IMR-90 (cell line): ENCODE measurements at regions of chr4 and their contacts with region 1.

Region 1: DNA sequence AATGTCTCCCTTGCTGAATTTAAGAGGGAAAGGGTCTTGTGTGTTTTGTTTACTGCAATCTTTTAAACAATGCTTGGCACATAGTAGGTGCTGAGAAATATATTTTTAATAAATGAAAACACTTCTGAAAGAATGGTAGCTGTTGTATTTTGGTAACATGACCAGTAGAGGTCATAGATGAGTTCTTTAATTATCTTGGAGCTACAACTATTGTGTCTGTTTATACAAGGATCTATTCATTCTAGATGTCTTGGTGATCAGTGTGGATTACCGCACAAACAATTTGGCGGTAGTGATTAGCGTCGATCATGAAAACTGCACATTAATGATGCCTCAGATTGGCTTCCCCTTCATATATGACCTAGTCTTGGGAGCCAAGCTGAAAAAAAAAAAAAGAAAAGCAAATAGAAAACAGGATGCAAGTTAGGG is 21.4 kb upstream of the SCRG1 start:
- DNase-seq: peak; percentile 28
- ATAC-seq: peak; percentile 55
- H3K4me3 ChIP-seq: no peak overlapping the region
- H3K27ac ChIP-seq: no peak overlapping the region
- H3K4me1 ChIP-seq: peaks cover 3% of the 10 kb centered on the region
- H3K27me3 ChIP-seq: no peaks in the 10 kb centered on the region
- CTCF ChIP-seq: peak; percentile 63
- POLR2A ChIP-seq: no peak
- RAD21 ChIP-seq: peak; percentile 55

Region 2: DNA sequence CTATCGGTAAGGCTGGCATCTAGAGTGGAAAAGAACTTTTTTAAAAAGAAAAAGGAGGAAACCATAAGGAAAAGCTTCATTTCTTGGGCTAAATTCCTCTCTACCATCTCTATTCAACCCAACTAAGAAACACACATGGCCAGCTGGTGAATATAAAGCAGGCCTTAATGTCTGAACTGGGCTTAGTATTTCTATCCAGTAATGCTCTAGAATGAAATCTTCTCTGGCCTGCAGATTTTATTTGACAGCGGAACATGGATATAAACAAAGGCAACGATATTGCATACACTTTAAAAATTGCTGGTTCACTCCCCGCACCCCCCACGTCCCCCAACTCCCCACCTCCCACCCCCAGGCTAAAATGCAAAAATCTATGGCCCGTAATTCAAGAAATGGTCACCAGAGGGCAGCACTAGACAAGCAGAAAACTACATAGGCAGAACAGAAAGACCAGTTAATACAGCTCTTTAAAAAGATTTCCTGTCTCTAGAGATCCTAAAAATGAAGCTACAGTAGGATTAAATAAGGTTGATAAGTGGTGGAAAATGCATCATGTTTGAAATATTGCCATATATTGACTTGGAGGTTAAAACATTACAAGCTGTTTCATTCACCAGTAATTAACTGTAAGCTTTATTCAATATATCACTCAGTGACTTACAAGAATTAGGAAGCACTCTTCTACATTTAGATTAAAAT is 407.0 kb before region 1 on chr4:
- CTCF ChIA-PET with region 1: interaction called, 3 read pairs
- POLR2A ChIA-PET with region 1: no interaction called
- dilution Hi-C with region 1: no loop called
- in situ Hi-C with region 1: loop called (anchors 5 kb)
- intact Hi-C with region 1: loop called (anchors 1 kb)
- DNase-seq: peak; percentile 48
- ATAC-seq: peak; percentile 63
- H3K4me3 ChIP-seq: no peak overlapping the region
- H3K27ac ChIP-seq: no peak overlapping the region
- H3K4me1 ChIP-seq: peaks cover 1% of the 10 kb centered on the region; the same call in 1 of the 2 replicates
- H3K27me3 ChIP-seq: peaks cover 7% of the 10 kb centered on the region
- CTCF ChIP-seq: peak; percentile 63
- POLR2A ChIP-seq: no peak
- RAD21 ChIP-seq: peak; percentile 74

Region 3: DNA sequence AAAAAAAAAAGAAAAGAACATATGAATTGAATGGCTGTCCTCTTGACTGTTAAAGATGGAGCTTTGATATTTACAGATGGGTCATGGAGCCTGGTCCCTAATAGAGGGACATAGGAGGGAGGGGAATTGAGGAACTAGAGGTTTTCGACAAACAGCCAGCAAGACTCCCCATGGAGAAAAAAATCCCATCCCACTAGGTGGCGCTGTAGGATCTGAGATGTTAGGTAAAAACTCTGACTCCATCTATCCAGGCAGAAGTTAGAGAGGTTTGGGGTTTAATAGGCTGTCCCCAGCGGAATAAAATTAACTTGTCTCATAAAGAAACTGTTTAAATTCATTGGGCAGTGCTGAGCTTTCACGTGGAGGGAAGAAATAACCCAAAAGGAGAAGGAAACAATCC is 132.0 kb before region 1 on chr4:
- CTCF ChIA-PET with region 1: no interaction called
- POLR2A ChIA-PET with region 1: no interaction called
- dilution Hi-C with region 1: no loop called
- in situ Hi-C with region 1: no loop called
- intact Hi-C with region 1: loop called (anchors 1 kb)
- DNase-seq: peak; percentile 57
- ATAC-seq: peak; percentile 42; the same call in 1 of the 2 replicates
- H3K4me3 ChIP-seq: no peak overlapping the region
- H3K27ac ChIP-seq: no peak overlapping the region
- H3K4me1 ChIP-seq: no peaks in the 10 kb centered on the region
- H3K27me3 ChIP-seq: no peaks in the 10 kb centered on the region
- CTCF ChIP-seq: peak; percentile 53
- POLR2A ChIP-seq: no peak
- RAD21 ChIP-seq: peak; percentile 50

Region 4: DNA sequence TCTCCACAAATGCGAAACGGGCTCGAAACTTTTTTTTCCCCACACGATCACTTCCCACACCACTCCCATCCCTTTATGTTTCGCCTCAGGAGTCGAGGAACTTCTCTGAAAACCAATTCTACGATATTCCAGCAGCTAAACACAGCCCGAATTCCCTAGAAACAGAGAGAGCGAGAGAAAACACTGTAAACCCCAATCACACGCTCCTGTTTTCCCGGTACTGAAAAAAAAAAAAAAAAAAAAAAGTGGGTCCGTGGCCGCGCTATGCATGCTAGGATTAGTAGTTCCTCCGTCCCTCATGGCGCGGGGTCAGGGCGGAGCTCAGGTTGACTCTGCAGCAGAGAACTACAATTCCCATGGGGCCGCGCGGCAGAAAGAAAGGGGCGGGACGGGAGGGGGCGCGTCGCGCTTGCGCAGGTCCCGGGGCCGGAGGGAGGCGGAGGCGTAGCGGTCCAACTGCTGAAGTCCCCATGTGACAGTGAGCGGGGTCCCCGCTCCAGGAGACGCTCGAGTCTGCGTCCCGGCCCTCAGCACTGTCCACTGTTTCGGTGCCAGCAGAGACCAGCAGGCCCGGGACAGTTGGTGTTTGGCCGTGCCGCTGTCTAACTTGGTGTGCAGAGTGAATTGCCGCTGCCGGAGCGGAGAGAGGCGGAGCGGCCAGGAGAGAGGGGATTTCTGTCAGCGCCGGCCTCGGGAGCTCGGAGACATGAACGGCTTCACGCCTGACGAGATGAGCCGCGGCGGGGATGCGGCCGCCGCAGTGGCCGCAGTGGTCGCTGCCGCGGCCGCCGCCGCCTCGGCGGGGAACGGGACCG is 49.7 kb before region 1 on chr4 and contains the start of gene SAP30:
- CTCF ChIA-PET with region 1: no interaction called
- POLR2A ChIA-PET with region 1: interaction called, 3 read pairs
- dilution Hi-C with region 1: no loop called
- in situ Hi-C with region 1: no loop called
- intact Hi-C with region 1: loop called (anchors 2 kb)
- DNase-seq: peak; percentile 98
- ATAC-seq: peak; percentile 91
- H3K4me3 ChIP-seq: peak within 1 kb of the TSS; percentile 96
- H3K27ac ChIP-seq: peak within 1 kb of the TSS; percentile 78
- H3K4me1 ChIP-seq: no peaks in the 10 kb centered on the region; the same call in 1 of the 2 replicates
- H3K27me3 ChIP-seq: no peaks in the 10 kb centered on the region
- CTCF ChIP-seq: no peak
- POLR2A ChIP-seq: peak; percentile 81
- RAD21 ChIP-seq: no peak
- total RNA-seq, gene SAP30: 3.8 and 13.9 TPM in 2 replicates

Region 5: GRCh38 chr4:173752610-173753230 is 332.4 kb after region 1 on chr4:
- CTCF ChIA-PET with region 1: interaction called, 3 read pairs
- POLR2A ChIA-PET with region 1: no interaction called
- dilution Hi-C with region 1: no loop called
- in situ Hi-C with region 1: no loop called
- intact Hi-C with region 1: loop called (anchors 5 kb)
- DNase-seq: peak; percentile 4
- ATAC-seq: no peak
- H3K4me3 ChIP-seq: no peak overlapping the region
- H3K27ac ChIP-seq: no peak overlapping the region
- H3K4me1 ChIP-seq: no peaks in the 10 kb centered on the region
- H3K27me3 ChIP-seq: no peaks in the 10 kb centered on the region
- CTCF ChIP-seq: 0 out of 2 replicates have a peak, but pooled peaks have one; percentile 18
- POLR2A ChIP-seq: no peak
- RAD21 ChIP-seq: no peak

Region 6: GRCh38 chr4:174120446-174121295 is 700.3 kb after region 1 on chr4:
- CTCF ChIA-PET with region 1: no interaction called
- POLR2A ChIA-PET with region 1: no interaction called
- dilution Hi-C with region 1: no loop called
- in situ Hi-C with region 1: no loop called
- intact Hi-C with region 1: loop called (anchors 2 kb)
- DNase-seq: peak; percentile 72
- ATAC-seq: peak; percentile 84
- H3K4me3 ChIP-seq: peak overlapping the region; percentile 54
- H3K27ac ChIP-seq: no peak overlapping the region
- H3K4me1 ChIP-seq: no peaks in the 10 kb centered on the region
- H3K27me3 ChIP-seq: no peaks in the 10 kb centered on the region; the same call in 1 of the 2 replicates
- CTCF ChIP-seq: peak; percentile 61
- POLR2A ChIP-seq: no peak
- RAD21 ChIP-seq: peak; percentile 52

Region 7: DNA sequence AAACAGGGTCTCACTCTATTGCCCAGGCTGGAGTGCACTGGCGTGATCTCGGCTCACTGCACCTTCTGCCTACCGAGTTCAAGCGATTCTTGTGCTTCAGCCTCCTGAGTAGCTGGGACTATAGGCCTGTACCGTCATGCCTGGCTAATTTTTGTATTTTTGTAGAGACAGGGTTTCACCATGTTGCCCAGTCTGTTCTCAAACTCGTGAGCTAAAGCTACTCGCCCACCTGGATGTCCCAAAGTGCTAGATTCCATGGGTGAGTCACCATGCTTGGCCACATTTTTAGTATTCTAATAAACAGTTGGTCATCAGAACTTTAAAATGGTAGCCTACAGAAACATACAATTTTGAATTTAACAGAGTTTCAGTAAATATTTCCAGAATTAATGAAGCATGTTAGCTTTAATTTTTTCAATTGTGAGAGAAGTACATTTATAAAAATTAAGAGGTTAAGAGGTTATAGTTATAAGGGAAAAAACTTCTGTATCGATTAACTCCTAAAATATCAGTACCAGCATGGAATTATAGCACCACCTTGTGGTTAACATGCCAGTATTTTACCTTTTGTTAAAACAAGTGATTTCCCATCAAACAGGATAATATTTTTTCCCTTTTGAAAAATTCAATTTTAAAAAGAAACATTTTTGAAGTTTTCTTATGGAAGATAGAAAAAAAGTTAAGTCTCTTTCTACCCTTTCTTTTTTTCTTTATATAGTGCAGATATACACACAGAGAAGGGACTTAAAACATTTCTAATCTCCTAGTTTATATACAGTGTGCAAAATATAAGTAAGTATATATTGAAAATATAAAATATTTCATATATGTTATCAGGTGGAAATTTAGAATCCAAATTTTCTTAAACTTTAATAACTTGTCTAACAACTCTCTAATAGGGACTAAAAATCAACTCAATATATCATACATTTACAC is 898.8 kb after region 1 on chr4:
- CTCF ChIA-PET with region 1: interaction called, 4 read pairs
- POLR2A ChIA-PET with region 1: no interaction called
- dilution Hi-C with region 1: no loop called
- in situ Hi-C with region 1: no loop called
- intact Hi-C with region 1: loop called (anchors 5 kb)
- DNase-seq: peak; percentile 46
- ATAC-seq: peak; percentile 31; the same call in 1 of the 2 replicates
- H3K4me3 ChIP-seq: no peak overlapping the region
- H3K27ac ChIP-seq: no peak overlapping the region
- H3K4me1 ChIP-seq: peaks cover 2% of the 10 kb centered on the region; the same call in 1 of the 2 replicates
- H3K27me3 ChIP-seq: no peaks in the 10 kb centered on the region
- CTCF ChIP-seq: peak; percentile 80
- POLR2A ChIP-seq: no peak
- RAD21 ChIP-seq: peak; percentile 80